CD4-positive, alpha-beta memory T cell (primary cell): ENCODE measurements at regions of chr13 and their contacts with region 1.

Region 1: GRCh38 chr13:77697217-77698103 is at the start of gene SLAIN1:
- DNase-seq: peak; percentile 84 to 91 (median 86)
- H3K4me3 ChIP-seq: peak within 1 kb of the TSS; percentile 84 to 90
- H3K4me3 Mint-ChIP-seq: peak within 1 kb of the TSS; percentile 97 to 100 (median 99)
- H3K27ac ChIP-seq: peak within 1 kb of the TSS; percentile 82
- H3K27ac Mint-ChIP-seq: peak within 1 kb of the TSS; percentile 85 to 97 (median 94)
- H3K4me1 ChIP-seq: peaks cover 38% of the 10 kb centered on the region
- H3K4me1 Mint-ChIP-seq: peaks cover 31 to 55% (median 41%) of the 10 kb centered on the region in 4 donors
- H3K27me3 ChIP-seq: no peaks in the 10 kb centered on the region
- H3K27me3 Mint-ChIP-seq: no peaks in the 10 kb centered on the region
- total RNA-seq, gene SLAIN1: 55.1 to 58.9 TPM

Region 2: GRCh38 chr13:77026818-77027585 is 670.5 kb before region 1 on chr13 and contains the start of gene FBXL3:
- CTCF ChIA-PET with region 1: no interaction called
- POLR2A ChIA-PET with region 1: interaction called, 7 read pairs
- intact Hi-C with region 1: loop called (anchors 1 kb)
- DNase-seq: peak; percentile 83 to 87 (median 87)
- H3K4me3 ChIP-seq: peak within 1 kb of the TSS; percentile 66 to 86
- H3K4me3 Mint-ChIP-seq: peak within 1 kb of the TSS; percentile 96 to 100 (median 99)
- H3K27ac ChIP-seq: peak within 1 kb of the TSS; percentile 94
- H3K27ac Mint-ChIP-seq: peak within 1 kb of the TSS; percentile 80 to 99 (median 97)
- H3K4me1 ChIP-seq: peaks cover 48% of the 10 kb centered on the region
- H3K4me1 Mint-ChIP-seq: peaks cover 29 to 62% (median 46%) of the 10 kb centered on the region in 4 donors
- H3K27me3 ChIP-seq: no peaks in the 10 kb centered on the region
- H3K27me3 Mint-ChIP-seq: no peaks in the 10 kb centered on the region
- total RNA-seq, gene FBXL3: 94.2 to 96.2 TPM

Region 3: GRCh38 chr13:77548095-77548494 is 149.4 kb before region 1 on chr13:
- CTCF ChIA-PET with region 1: no interaction called
- POLR2A ChIA-PET with region 1: no interaction called
- intact Hi-C with region 1: no loop called
- DNase-seq: no peak
- H3K4me3 ChIP-seq: no peak overlapping the region
- H3K4me3 Mint-ChIP-seq: no peak overlapping the region
- H3K27ac ChIP-seq: no peak overlapping the region
- H3K27ac Mint-ChIP-seq: no peak overlapping the region
- H3K4me1 ChIP-seq: no peaks in the 10 kb centered on the region
- H3K4me1 Mint-ChIP-seq: no peaks in the 10 kb centered on the region
- H3K27me3 ChIP-seq: no peaks in the 10 kb centered on the region
- H3K27me3 Mint-ChIP-seq: peaks cover 8 to 10% of the 10 kb centered on the region in 2 donors

Region 4: DNA sequence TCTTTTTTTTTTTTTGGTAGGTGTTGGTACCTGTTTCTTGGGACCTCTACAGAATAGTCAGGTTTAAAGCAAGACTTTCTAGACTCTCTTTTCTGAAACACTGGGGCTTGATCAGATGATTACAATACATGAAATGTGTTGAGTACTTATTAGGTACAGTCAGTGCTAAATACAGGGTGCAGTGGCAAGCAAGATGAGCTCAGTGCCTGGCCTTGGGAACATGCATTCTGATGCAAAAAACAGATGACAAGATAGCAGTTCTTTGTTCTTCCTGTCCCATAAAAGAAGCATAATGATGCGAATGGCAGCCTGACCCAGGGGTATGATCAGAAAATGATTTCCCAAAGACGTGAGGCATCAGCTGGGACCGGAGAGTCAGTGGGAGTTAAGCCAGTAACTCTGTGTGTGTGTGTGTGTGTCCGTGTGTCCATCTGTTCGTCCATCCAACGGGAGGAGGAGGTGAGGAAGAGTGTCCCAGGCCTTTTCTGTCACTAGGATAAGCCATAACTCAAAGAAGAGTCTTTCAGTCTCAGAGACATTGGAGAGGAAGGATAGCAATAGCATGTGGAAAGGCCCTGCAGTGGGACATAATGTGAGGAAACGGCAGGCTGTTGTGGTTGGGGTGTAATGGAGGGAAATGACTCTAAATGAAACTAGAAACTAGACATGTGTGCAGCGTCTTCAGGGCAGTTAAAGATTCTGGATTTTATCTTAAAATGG is 32.2 kb after region 1 on chr13:
- CTCF ChIA-PET with region 1: no interaction called
- POLR2A ChIA-PET with region 1: interaction called, 7 read pairs
- intact Hi-C with region 1: loop called (anchors 2 kb)
- DNase-seq: peak in 4 of 5 donors; percentile 13 to 37 (median 13)
- H3K4me3 ChIP-seq: peak overlapping the region in 1 of 2 donors; percentile 4
- H3K4me3 Mint-ChIP-seq: peak overlapping the region; percentile 44 to 86 (median 64)
- H3K27ac ChIP-seq: no peak overlapping the region
- H3K27ac Mint-ChIP-seq: peak overlapping the region; percentile 9 to 88 (median 75)
- H3K4me1 ChIP-seq: peaks cover 20% of the 10 kb centered on the region
- H3K4me1 Mint-ChIP-seq: peaks cover 27 to 48% (median 35%) of the 10 kb centered on the region in 4 donors
- H3K27me3 ChIP-seq: no peaks in the 10 kb centered on the region
- H3K27me3 Mint-ChIP-seq: no peaks in the 10 kb centered on the region

Region 5: GRCh38 chr13:77918391-77919245 is 221.2 kb after region 1 on chr13 and contains the start of gene EDNRB:
- CTCF ChIA-PET with region 1: no interaction called
- POLR2A ChIA-PET with region 1: no interaction called
- intact Hi-C with region 1: no loop called
- DNase-seq: no peak
- H3K4me3 ChIP-seq: no peak within 1 kb of the TSS
- H3K4me3 Mint-ChIP-seq: peak within 1 kb of the TSS in 3 of 8 donors; percentile 10 to 30 (median 24)
- H3K27ac ChIP-seq: no peak within 1 kb of the TSS
- H3K27ac Mint-ChIP-seq: peak within 1 kb of the TSS in 1 of 7 donors; percentile 11
- H3K4me1 ChIP-seq: peaks cover 13% of the 10 kb centered on the region
- H3K4me1 Mint-ChIP-seq: peaks cover 0 to 5% (median 3%) of the 10 kb centered on the region in 4 donors
- H3K27me3 ChIP-seq: peaks cover 10% of the 10 kb centered on the region
- H3K27me3 Mint-ChIP-seq: peaks cover 10 to 33% of the 10 kb centered on the region in 2 donors
- total RNA-seq, gene EDNRB: not detected

Region 6: DNA sequence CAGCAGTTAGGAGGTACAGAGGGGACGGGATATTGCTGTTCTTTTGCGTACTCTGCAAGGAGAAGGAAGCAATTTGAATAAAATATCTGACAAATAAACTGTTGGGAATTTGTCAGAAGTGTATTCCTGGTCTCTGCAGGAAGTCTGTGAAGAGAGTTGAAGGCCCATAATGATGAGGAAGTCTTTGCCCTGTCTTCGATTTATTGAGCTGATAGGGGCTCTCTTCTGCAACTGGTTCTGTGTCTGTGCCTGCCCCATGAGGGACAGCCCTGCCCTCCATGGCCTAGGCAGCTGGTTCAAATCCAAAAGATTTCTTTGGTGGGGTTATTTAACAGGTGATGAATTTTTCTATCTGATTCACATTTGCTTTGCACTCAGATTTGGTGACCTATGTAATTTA is 560.8 kb after region 1 on chr13:
- CTCF ChIA-PET with region 1: no interaction called
- POLR2A ChIA-PET with region 1: no interaction called
- intact Hi-C with region 1: no loop called
- DNase-seq: no peak
- H3K4me3 ChIP-seq: no peak overlapping the region
- H3K4me3 Mint-ChIP-seq: no peak overlapping the region
- H3K27ac ChIP-seq: no peak overlapping the region
- H3K27ac Mint-ChIP-seq: no peak overlapping the region
- H3K4me1 ChIP-seq: no peaks in the 10 kb centered on the region
- H3K4me1 Mint-ChIP-seq: no peaks in the 10 kb centered on the region
- H3K27me3 ChIP-seq: no peaks in the 10 kb centered on the region
- H3K27me3 Mint-ChIP-seq: no peaks in the 10 kb centered on the region

Region 7: GRCh38 chr13:78658635-78659449 is 961.4 kb after region 1 on chr13 and contains the start of gene OBI1:
- CTCF ChIA-PET with region 1: no interaction called
- POLR2A ChIA-PET with region 1: no interaction called
- intact Hi-C with region 1: loop called (anchors 10 kb)
- DNase-seq: peak; percentile 89 to 91 (median 89)
- H3K4me3 ChIP-seq: peak within 1 kb of the TSS; percentile 84 to 94
- H3K4me3 Mint-ChIP-seq: peak within 1 kb of the TSS; percentile 98 to 100 (median 100)
- H3K27ac ChIP-seq: peak within 1 kb of the TSS; percentile 73
- H3K27ac Mint-ChIP-seq: peak within 1 kb of the TSS; percentile 87 to 99 (median 98)
- H3K4me1 ChIP-seq: peaks cover 24% of the 10 kb centered on the region
- H3K4me1 Mint-ChIP-seq: peaks cover 23 to 42% (median 37%) of the 10 kb centered on the region in 4 donors
- H3K27me3 ChIP-seq: no peaks in the 10 kb centered on the region
- H3K27me3 Mint-ChIP-seq: peaks cover 0 to 2% of the 10 kb centered on the region in 2 donors
- total RNA-seq, gene OBI1: 16.3 to 16.7 TPM